Activated CD4-positive, alpha-beta memory T cell treated with anti-CD3 and anti-CD28 coated beads, Interleukin-2, amount 10 ng/mL, durations not matched to agents 7 days and 5 days (primary cell): ENCODE measurements at regions of chr19 and their contacts with region 1.

Region 1: GRCh38 chr19:48993175-48994034 is at the starts of genes GYS1 and RUVBL2:
- DNase-seq: peak; percentile 99
- H3K4me3 Mint-ChIP-seq: peak within 1 kb of the TSS; percentile 98
- H3K27ac Mint-ChIP-seq: peak within 1 kb of the TSS; percentile 95
- H3K4me1 Mint-ChIP-seq: peaks cover 51% of the 10 kb centered on the region
- H3K27me3 Mint-ChIP-seq: no peaks in the 10 kb centered on the region
- total RNA-seq, gene GYS1: 55.1 to 56.3 TPM
- total RNA-seq, gene RUVBL2: 74.7 to 80.1 TPM

Region 2: GRCh38 chr19:48795055-48795684 is 198.2 kb before region 1 on chr19:
- CTCF ChIA-PET with region 1: interaction called, 15 read pairs
- POLR2A ChIA-PET with region 1: no interaction called
- DNase-seq: peak; percentile 89
- H3K4me3 Mint-ChIP-seq: peak overlapping the region; percentile 90
- H3K27ac Mint-ChIP-seq: peak overlapping the region; percentile 80
- H3K4me1 Mint-ChIP-seq: peaks cover 8% of the 10 kb centered on the region
- H3K27me3 Mint-ChIP-seq: no peaks in the 10 kb centered on the region

Region 3: DNA sequence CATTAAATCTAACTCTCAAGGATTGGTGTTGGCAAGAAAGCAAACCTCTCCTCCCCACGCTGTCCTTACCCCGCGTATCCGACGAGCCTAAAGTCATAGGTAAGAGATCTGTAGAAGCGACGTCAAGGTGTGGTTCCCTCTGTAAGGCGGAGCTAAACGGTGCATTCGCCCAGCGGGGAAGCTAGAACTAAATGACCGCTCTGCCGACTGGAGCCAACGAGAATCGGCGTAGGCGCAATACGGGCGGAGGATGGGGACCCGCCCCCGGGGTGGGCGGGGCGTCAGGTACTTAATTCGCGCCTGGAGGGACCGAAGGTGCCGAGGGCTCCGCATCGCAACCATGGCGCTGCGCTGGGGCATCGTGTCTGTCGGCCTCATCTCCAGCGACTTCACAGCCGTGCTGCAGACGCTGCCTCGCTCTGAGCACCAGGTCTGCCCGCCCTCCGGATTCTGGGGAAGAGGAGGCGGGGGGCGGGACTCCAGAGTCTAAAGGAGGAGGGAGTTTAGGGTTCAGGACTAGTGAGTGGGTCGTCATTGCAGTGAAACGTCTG is 59.9 kb before region 1 on chr19 and contains the start of gene DHDH:
- CTCF ChIA-PET with region 1: interaction called, 13 read pairs
- POLR2A ChIA-PET with region 1: interaction called, 3 read pairs
- DNase-seq: peak; percentile 88
- H3K4me3 Mint-ChIP-seq: peak within 1 kb of the TSS; percentile 75
- H3K27ac Mint-ChIP-seq: peak within 1 kb of the TSS; percentile 36
- H3K4me1 Mint-ChIP-seq: peaks cover 20% of the 10 kb centered on the region
- H3K27me3 Mint-ChIP-seq: peaks cover 3% of the 10 kb centered on the region
- total RNA-seq, gene DHDH: 1.6 to 2.9 TPM

Region 4: GRCh38 chr19:48970923-48971395 is 22.4 kb before region 1 on chr19:
- CTCF ChIA-PET with region 1: interaction called, 103 read pairs
- POLR2A ChIA-PET with region 1: interaction called, 13 read pairs
- DNase-seq: peak; percentile 81
- H3K4me3 Mint-ChIP-seq: no peak overlapping the region
- H3K27ac Mint-ChIP-seq: no peak overlapping the region
- H3K4me1 Mint-ChIP-seq: peaks cover 27% of the 10 kb centered on the region
- H3K27me3 Mint-ChIP-seq: no peaks in the 10 kb centered on the region

Region 5: GRCh38 chr19:49009828-49010227 is 16.4 kb after region 1 on chr19:
- CTCF ChIA-PET with region 1: interaction called, 16 read pairs
- POLR2A ChIA-PET with region 1: interaction called, 5 read pairs
- DNase-seq: no peak
- H3K4me3 Mint-ChIP-seq: no peak overlapping the region
- H3K27ac Mint-ChIP-seq: no peak overlapping the region
- H3K4me1 Mint-ChIP-seq: no peaks in the 10 kb centered on the region
- H3K27me3 Mint-ChIP-seq: no peaks in the 10 kb centered on the region

Region 6: GRCh38 chr19:49127674-49128544 is 134.5 kb after region 1 on chr19:
- CTCF ChIA-PET with region 1: interaction called, 12 read pairs
- POLR2A ChIA-PET with region 1: no interaction called
- DNase-seq: peak; percentile 96
- H3K4me3 Mint-ChIP-seq: peak overlapping the region; percentile 80
- H3K27ac Mint-ChIP-seq: peak overlapping the region; percentile 73
- H3K4me1 Mint-ChIP-seq: peaks cover 19% of the 10 kb centered on the region
- H3K27me3 Mint-ChIP-seq: peaks cover 6% of the 10 kb centered on the region